Left lung (tissue), 14 donors: ENCODE measurements at regions of chr15 and their contacts with region 1.

Region 1: DNA sequence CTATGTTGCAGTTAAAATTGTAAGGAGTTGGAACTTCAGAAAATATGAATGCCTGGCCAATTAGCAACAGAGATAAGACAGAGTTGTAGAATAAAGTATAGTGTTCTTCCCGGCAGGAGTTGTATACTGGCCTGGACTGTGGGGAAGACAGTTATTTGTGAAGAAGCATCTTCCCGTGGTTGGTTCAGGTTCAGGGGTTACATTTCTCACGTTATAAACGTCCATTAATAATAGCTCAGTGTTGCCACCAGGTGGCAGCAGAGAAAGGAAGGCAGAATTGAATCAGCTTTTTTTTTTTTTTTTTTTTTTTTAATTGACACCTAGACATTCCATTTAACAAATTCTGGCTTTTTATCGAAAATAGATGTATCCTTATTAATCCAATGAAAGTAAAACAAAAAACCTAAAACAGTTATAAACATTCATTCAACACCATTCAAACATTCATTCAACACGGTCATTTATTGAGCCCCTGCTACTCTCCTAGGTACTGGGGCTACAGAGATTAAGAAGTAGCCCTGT is 66.4 kb upstream of the NR2E3 start:
- DNase-seq: peak in 2 of 4 donors; percentile 35 to 76
- ATAC-seq: peak; percentile 63
- H3K4me3 ChIP-seq: no peak overlapping the region
- H3K27ac ChIP-seq: no peak overlapping the region
- H3K4me1 ChIP-seq: peaks cover 0 to 6% of the 10 kb centered on the region in 2 donors
- H3K27me3 ChIP-seq: no peaks in the 10 kb centered on the region
- CTCF ChIP-seq: peak; percentile 54 to 84

Region 2: DNA sequence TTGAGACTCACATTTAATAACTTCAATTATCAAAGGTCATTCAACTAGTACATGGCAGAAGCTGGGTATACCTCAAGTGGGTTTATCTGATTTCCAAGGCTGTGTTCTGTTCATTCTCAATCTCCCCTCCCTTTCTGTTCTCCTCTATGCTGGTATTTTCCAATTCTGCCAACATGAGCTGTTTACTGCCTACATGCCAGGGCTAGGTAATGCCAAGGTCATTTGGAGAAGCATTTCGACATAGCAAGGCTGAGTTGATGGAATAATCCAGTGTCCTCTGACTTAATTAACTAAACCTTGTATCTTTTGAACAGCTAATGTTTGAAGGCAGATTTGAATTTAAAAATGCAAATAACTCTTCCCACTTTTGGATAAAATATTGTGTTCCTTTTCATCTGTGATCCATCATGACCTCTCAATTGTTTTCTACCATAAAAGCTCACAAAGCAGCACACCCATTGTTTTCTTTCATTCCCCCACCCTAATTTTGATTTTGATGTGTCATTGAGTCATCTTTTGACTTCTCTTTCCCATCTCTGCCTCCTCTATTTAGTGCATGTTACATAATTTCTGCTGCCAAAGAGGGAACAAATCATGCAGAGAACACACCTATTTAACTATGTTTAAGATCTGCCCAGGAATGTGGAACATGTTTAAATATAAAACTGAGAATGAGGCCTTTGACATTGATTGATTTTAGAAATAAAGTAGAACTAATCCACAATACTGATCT is 242.4 kb before region 1 on chr15:
- intact Hi-C with region 1: no loop called
- DNase-seq: no peak
- ATAC-seq: peak; percentile 26
- H3K4me3 ChIP-seq: no peak overlapping the region
- H3K27ac ChIP-seq: no peak overlapping the region
- H3K4me1 ChIP-seq: no peaks in the 10 kb centered on the region
- H3K27me3 ChIP-seq: no peaks in the 10 kb centered on the region
- CTCF ChIP-seq: no peak

Region 3: GRCh38 chr15:72155635-72156616 is 412.0 kb after region 1 on chr15:
- intact Hi-C with region 1: loop called in 1 of 2 experiments (anchors 10 kb)
- DNase-seq: peak; percentile 84 to 91 (median 86)
- ATAC-seq: peak; percentile 86
- H3K4me3 ChIP-seq: peak overlapping the region; percentile 27 to 48
- H3K27ac ChIP-seq: peak overlapping the region; percentile 74 to 87
- H3K4me1 ChIP-seq: peaks cover 4 to 25% of the 10 kb centered on the region in 2 donors
- H3K27me3 ChIP-seq: no peaks in the 10 kb centered on the region
- CTCF ChIP-seq: peak; percentile 74 to 82